B cell (primary cell): ENCODE measurements at regions of chr1 and their contacts with region 1.

Region 1: DNA sequence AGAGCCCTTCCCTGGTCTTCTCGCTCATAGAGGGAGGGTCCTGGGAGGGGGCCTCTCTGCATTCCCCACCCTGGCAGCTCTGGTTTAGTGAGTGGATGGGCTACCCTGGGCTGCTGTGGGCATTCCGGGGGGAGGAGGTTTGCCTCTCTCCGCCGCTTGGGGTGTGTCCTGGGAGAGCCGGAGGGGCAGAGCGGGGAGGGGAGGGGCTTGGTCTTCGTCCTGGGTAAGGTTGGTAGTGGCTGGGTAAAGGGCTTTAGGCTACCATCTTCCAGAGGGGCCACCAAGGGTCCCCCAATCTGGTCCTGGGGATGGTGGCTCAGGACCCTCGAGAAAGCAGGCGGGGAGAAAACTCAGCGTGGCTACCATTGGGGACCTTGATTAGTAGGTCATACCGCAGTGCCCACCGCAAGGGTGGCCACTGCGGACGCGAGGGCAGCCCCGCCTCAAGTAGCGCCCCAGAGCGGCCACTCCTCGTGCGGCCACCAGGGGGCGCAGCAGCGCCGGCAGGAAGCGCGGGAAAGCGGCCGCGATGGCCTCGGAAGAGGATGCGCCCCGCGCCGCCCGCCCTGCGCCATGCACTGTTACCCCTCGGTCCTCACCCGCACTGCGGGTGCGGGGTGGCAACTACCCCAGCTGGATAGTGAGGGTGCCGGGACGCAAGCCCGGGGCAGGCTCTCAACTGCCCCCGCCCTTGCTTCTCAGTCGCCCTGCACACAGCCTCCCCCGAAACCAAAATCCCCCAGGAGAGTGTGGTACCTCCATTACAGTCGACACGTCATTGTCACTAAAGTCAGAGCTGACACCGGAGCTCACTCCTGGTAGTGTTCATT is 44.1 kb upstream of the SLC25A33 start:
- DNase-seq: peak; percentile 81
- ATAC-seq: peak; percentile 71
- H3K4me3 ChIP-seq: peak overlapping the region in 3 of 5 experiments; percentile 44 to 64 (median 44)
- H3K4me3 Mint-ChIP-seq: peak overlapping the region; percentile 80
- H3K27ac ChIP-seq: no peak overlapping the region
- H3K27ac Mint-ChIP-seq: no peak overlapping the region
- H3K4me1 ChIP-seq: peaks cover 9 to 10% of the 10 kb centered on the region in 2 donors
- H3K4me1 Mint-ChIP-seq: peaks cover 8% of the 10 kb centered on the region
- H3K27me3 ChIP-seq: peaks cover 0 to 6% (median 2%) of the 10 kb centered on the region in 4 experiments
- H3K27me3 Mint-ChIP-seq: peaks cover 17% of the 10 kb centered on the region
- CTCF ChIP-seq: peak; percentile 98

Region 2: GRCh38 chr1:9196129-9197040 is 298.8 kb before region 1 on chr1:
- CTCF ChIA-PET with region 1: interaction called, 10 read pairs
- POLR2A ChIA-PET with region 1: no interaction called
- intact Hi-C with region 1: loop called (anchors 1 kb)
- DNase-seq: peak; percentile 81
- ATAC-seq: peak; percentile 78
- H3K4me3 ChIP-seq: no peak overlapping the region
- H3K4me3 Mint-ChIP-seq: peak overlapping the region; percentile 16
- H3K27ac ChIP-seq: no peak overlapping the region
- H3K27ac Mint-ChIP-seq: no peak overlapping the region
- H3K4me1 ChIP-seq: peaks cover 7 to 13% of the 10 kb centered on the region in 2 donors
- H3K4me1 Mint-ChIP-seq: peaks cover 31% of the 10 kb centered on the region
- H3K27me3 ChIP-seq: peaks cover 0 to 38% (median 22%) of the 10 kb centered on the region in 4 experiments
- H3K27me3 Mint-ChIP-seq: peaks cover 32% of the 10 kb centered on the region
- CTCF ChIP-seq: peak; percentile 84

Region 3: GRCh38 chr1:9250411-9251381 is 244.4 kb before region 1 on chr1:
- CTCF ChIA-PET with region 1: interaction called, 10 read pairs
- POLR2A ChIA-PET with region 1: no interaction called
- intact Hi-C with region 1: no loop called
- DNase-seq: no peak
- ATAC-seq: no peak
- H3K4me3 ChIP-seq: no peak overlapping the region
- H3K4me3 Mint-ChIP-seq: no peak overlapping the region
- H3K27ac ChIP-seq: no peak overlapping the region
- H3K27ac Mint-ChIP-seq: no peak overlapping the region
- H3K4me1 ChIP-seq: no peaks in the 10 kb centered on the region
- H3K4me1 Mint-ChIP-seq: no peaks in the 10 kb centered on the region
- H3K27me3 ChIP-seq: no peaks in the 10 kb centered on the region
- H3K27me3 Mint-ChIP-seq: no peaks in the 10 kb centered on the region
- CTCF ChIP-seq: no peak

Region 4: DNA sequence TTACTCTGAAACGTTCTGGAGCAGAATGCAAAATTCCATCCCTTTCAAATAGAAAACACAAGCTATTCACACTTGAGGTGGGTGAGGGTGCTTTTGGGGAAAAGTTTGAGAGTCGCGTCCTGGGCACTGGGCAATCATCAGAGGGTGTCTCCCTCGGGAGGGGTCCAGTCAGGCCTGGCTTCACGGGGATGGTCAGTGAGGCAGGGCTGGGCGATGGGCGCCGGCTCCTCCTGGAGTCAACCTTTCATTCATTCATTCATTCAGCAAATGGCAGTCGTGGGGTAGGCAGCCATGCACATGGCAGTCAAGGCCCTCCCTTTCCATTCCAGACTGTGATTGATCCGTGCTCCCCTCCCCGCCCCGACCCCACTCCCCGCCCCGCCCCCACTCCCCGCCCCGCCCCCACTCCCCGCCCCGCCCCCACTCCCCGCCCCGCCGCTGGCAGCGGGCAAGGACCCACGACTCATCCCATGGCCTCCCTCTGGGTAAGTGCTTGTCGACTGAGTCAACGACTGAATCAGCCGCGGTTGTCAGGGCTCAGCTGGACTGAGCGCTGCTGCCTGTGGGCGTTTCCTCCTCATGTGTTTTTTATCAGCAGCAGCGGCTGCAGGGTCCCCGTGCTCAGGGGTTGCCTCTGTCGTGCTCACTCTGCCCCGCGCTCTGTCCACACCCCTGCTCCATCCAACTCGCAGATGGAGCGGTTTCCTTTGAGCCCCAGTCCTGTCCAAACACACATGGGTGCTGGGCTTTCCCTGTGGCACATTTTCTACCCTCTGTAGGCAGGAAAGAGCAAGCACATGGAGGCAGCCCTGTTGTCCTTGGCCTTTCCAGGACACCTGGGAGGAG is 214.9 kb before region 1 on chr1:
- CTCF ChIA-PET with region 1: interaction called, 36 read pairs
- POLR2A ChIA-PET with region 1: interaction called, 5 read pairs
- intact Hi-C with region 1: no loop called
- DNase-seq: no peak
- ATAC-seq: no peak
- H3K4me3 ChIP-seq: no peak overlapping the region
- H3K4me3 Mint-ChIP-seq: no peak overlapping the region
- H3K27ac ChIP-seq: no peak overlapping the region
- H3K27ac Mint-ChIP-seq: no peak overlapping the region
- H3K4me1 ChIP-seq: peaks cover 0 to 20% of the 10 kb centered on the region in 2 donors
- H3K4me1 Mint-ChIP-seq: peaks cover 23% of the 10 kb centered on the region
- H3K27me3 ChIP-seq: peaks cover 0 to 14% (median 4%) of the 10 kb centered on the region in 4 experiments
- H3K27me3 Mint-ChIP-seq: peaks cover 14% of the 10 kb centered on the region
- CTCF ChIP-seq: no peak

Region 5: DNA sequence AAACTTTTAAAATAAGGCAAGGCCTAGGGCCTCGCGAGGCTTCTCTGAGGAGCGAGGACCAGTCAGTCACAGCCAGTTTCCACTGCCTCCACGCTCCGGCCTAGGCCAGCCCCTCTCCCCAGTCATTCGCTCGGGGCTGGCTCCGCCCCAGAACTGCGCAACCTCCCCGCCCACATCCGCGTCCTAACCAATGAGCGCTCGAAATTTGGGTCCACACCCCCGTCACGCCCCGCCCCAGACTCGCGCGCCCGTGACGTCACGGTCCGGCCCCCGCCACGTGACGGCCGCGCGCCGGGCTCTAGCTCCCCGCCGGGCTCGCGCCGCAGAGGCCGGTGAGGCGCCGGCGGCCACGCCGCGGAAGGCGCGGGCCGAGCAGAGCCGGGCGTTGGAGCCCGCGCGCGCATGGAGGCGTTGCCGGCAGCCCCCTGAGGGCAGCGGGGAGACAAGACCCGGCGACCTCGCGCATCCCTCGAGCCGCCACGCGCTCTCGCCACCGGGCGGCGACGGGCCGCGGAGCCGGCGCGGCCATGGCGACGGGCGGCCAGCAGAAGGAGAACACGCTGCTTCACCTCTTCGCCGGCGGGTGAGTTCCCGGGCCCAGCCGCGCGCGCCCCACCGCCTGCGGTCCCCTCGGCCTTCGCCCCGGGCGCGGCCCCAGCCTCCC is 44.2 kb after region 1 on chr1 and contains the start of gene SLC25A33:
- CTCF ChIA-PET with region 1: no interaction called
- POLR2A ChIA-PET with region 1: no interaction called
- intact Hi-C with region 1: loop called (anchors 1 kb)
- DNase-seq: peak; percentile 99
- ATAC-seq: peak; percentile 97
- H3K4me3 ChIP-seq: peak within 1 kb of the TSS; percentile 24 to 80 (median 73)
- H3K4me3 Mint-ChIP-seq: peak within 1 kb of the TSS; percentile 97
- H3K27ac ChIP-seq: peak within 1 kb of the TSS; percentile 78 to 90
- H3K27ac Mint-ChIP-seq: peak within 1 kb of the TSS; percentile 98
- H3K4me1 ChIP-seq: peaks cover 12 to 16% of the 10 kb centered on the region in 2 donors
- H3K4me1 Mint-ChIP-seq: peaks cover 29% of the 10 kb centered on the region
- H3K27me3 ChIP-seq: no peaks in the 10 kb centered on the region
- H3K27me3 Mint-ChIP-seq: no peaks in the 10 kb centered on the region
- CTCF ChIP-seq: no peak
- total RNA-seq, gene SLC25A33: 5.0 and 5.9 TPM in 2 replicates